OCI-LY7 (cell line): ENCODE measurements at regions of chr3 and their contacts with region 1.

Region 1: DNA sequence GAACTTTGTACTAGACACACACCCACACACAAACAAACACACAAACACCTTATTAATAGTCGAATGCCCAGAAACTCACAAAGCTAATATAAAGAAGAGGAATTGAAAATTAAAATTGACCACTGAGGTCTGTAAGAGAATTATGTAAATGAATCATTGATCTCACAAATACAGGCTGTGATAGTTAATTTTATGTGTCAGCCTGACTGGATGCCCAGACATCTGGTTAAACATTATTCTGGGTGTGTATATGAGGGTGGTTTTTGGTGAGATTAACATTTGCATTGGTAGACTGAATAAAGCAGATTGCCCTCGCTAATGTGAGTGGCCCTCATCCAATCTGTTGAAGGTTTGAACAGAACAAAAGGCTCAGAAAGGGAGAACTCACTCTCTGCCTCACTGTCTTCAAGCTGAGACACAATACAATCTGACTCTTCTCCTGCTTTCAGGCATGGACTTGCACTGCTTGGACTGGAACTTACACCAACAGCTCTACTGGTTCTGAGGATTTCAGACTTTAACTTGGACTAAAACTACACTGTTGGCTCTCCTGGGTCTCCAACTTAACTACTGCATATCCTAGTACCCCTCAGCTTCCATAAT is 199.4 kb upstream of the TTC14 start:
- DNase-seq: no peak
- H3K4me3 ChIP-seq: no peak overlapping the region
- H3K27ac ChIP-seq: no peak overlapping the region
- H3K4me1 ChIP-seq: no peaks in the 10 kb centered on the region
- CTCF ChIP-seq: no peak

Region 2: DNA sequence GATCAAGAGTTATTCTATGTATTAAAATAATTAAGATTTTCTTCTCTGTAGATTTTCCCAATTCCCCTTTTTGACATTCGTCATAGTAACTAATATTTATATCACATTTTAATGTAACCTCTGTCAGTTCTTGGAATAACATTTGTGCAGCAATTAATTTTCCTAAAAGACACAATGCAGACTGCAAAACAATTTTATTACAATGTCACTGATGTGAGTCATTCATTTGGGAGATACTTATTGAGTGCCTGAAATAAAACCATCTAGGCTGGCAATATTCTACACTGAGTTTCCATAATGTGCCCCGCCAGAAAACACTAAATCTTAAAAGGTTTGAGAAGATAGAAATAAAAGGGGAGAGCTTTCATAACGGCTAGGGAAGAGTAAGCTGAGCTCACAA is 756.4 kb before region 1 on chr3:
- CTCF ChIA-PET with region 1: no interaction called
- POLR2A ChIA-PET with region 1: no interaction called
- intact Hi-C with region 1: no loop called
- DNase-seq: no peak
- H3K4me3 ChIP-seq: no peak overlapping the region
- H3K27ac ChIP-seq: no peak overlapping the region
- H3K4me1 ChIP-seq: peaks cover 1% of the 10 kb centered on the region
- CTCF ChIP-seq: no peak

Region 3: DNA sequence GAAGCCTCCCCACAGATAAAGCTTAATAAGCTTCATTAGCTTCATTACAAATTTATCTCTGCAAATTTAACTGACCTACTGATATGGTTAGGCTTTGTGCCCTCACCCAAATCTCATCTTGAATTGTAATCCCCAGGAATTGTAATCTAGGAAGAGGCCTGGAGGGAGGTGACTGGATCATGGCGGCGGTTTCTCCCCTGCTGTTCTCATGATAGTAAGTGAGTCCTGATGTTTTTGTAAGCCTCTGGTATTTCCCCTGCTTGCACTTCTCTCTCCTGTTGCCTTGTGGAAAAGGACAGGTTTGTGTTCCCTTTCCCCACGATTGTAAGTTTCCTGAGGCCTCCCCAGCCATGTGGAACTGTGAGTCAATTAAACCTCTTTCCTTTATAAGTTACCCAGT is 26.7 kb before region 1 on chr3:
- CTCF ChIA-PET with region 1: no interaction called
- POLR2A ChIA-PET with region 1: no interaction called
- intact Hi-C with region 1: loop called (anchors 1 kb)
- DNase-seq: no peak
- H3K4me3 ChIP-seq: no peak overlapping the region
- H3K27ac ChIP-seq: no peak overlapping the region
- H3K4me1 ChIP-seq: no peaks in the 10 kb centered on the region
- CTCF ChIP-seq: no peak